ENCODE measurements at regions of chr19 and their contacts with region 1.

Region 1: GRCh38 chr19:10701955-10702525 is 801 bp downstream of the QTRT1 start:
- DNase-seq: peak; percentile 56
- ATAC-seq: peak; percentile 84
- H3K4me3 ChIP-seq: peak overlapping the region; percentile 73 to 95 (median 90)
- H3K27ac ChIP-seq: peak overlapping the region; percentile 62
- H3K4me1 ChIP-seq: peaks cover 11% of the 10 kb centered on the region
- H3K27me3 ChIP-seq: no peaks in the 10 kb centered on the region; a peak in 1 of 5 replicates
- CTCF ChIP-seq: peak; percentile 75
- EP300 ChIP-seq: no peak
- POLR2A ChIP-seq: no peak
- RAD21 ChIP-seq: peak; percentile 32; the same call in 1 of the 2 replicates

Region 2: GRCh38 chr19:10653715-10654492 is 48.1 kb before region 1 on chr19 and contains the start of gene ILF3:
- CTCF ChIA-PET with region 1: no interaction called
- POLR2A ChIA-PET with region 1: interaction called, 10 read pairs
- in situ Hi-C with region 1: no loop called
- intact Hi-C with region 1: no loop called
- DNase-seq: peak; percentile 100
- ATAC-seq: peak; percentile 84
- H3K4me3 ChIP-seq: peak within 1 kb of the TSS; percentile 92 to 96 (median 93)
- H3K27ac ChIP-seq: peak within 1 kb of the TSS; percentile 95
- H3K4me1 ChIP-seq: peaks cover 45% of the 10 kb centered on the region
- H3K27me3 ChIP-seq: no peaks in the 10 kb centered on the region; a peak in 1 of 5 replicates
- CTCF ChIP-seq: no peak; the same call in 1 of the 2 replicates
- EP300 ChIP-seq: peak in 1 of 2 experiments; percentile 49; a peak in 2 of 4 replicates
- POLR2A ChIP-seq: peak; percentile 87 to 94
- RAD21 ChIP-seq: 0 out of 2 replicates have a peak, but pooled peaks have one; percentile 9
- total RNA-seq, gene ILF3: 120 and 127 TPM in 2 replicates

Region 3: DNA sequence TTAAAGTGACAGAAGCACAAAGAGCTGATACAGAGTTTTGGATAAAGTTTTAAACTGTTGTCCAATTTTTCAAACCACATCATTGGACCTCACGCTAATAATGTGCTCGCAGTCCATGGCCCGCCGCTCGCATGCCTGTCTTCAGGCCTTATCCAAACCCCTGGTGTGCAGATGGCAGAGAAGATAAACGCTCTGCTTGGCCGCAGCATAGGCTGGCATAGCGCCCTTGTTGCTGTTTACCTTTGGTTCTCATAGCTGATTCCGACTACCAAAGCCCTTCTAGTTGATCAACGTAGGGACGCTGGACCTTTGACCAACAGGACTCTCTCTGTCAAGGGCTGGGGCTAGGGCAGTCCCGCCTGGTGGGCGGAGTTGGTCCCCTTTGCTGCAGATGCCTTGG is 24.3 kb before region 1 on chr19:
- CTCF ChIA-PET with region 1: no interaction called
- POLR2A ChIA-PET with region 1: no interaction called
- in situ Hi-C with region 1: no loop called
- intact Hi-C with region 1: no loop called
- DNase-seq: no peak
- ATAC-seq: no peak
- H3K4me3 ChIP-seq: no peak overlapping the region
- H3K27ac ChIP-seq: no peak overlapping the region
- H3K4me1 ChIP-seq: no peaks in the 10 kb centered on the region
- H3K27me3 ChIP-seq: no peaks in the 10 kb centered on the region; a peak in 1 of 5 replicates
- CTCF ChIP-seq: no peak
- EP300 ChIP-seq: no peak
- POLR2A ChIP-seq: no peak
- RAD21 ChIP-seq: no peak

Region 4: GRCh38 chr19:10712045-10712444 is 10.0 kb after region 1 on chr19:
- CTCF ChIA-PET with region 1: no interaction called
- POLR2A ChIA-PET with region 1: interaction called, 26 read pairs
- in situ Hi-C with region 1: no loop called
- intact Hi-C with region 1: no loop called
- DNase-seq: no peak
- ATAC-seq: no peak
- H3K4me3 ChIP-seq: no peak overlapping the region
- H3K27ac ChIP-seq: no peak overlapping the region
- H3K4me1 ChIP-seq: peaks cover 11% of the 10 kb centered on the region
- H3K27me3 ChIP-seq: no peaks in the 10 kb centered on the region
- CTCF ChIP-seq: no peak
- EP300 ChIP-seq: no peak
- POLR2A ChIP-seq: no peak
- RAD21 ChIP-seq: no peak

Region 5: GRCh38 chr19:10730923-10731322 is 28.9 kb after region 1 on chr19:
- CTCF ChIA-PET with region 1: no interaction called
- POLR2A ChIA-PET with region 1: no interaction called
- in situ Hi-C with region 1: no loop called
- intact Hi-C with region 1: no loop called
- DNase-seq: no peak
- ATAC-seq: no peak
- H3K4me3 ChIP-seq: no peak overlapping the region
- H3K27ac ChIP-seq: no peak overlapping the region
- H3K4me1 ChIP-seq: peaks cover 23% of the 10 kb centered on the region
- H3K27me3 ChIP-seq: no peaks in the 10 kb centered on the region
- CTCF ChIP-seq: no peak
- EP300 ChIP-seq: no peak
- POLR2A ChIP-seq: no peak
- RAD21 ChIP-seq: no peak

Region 6: DNA sequence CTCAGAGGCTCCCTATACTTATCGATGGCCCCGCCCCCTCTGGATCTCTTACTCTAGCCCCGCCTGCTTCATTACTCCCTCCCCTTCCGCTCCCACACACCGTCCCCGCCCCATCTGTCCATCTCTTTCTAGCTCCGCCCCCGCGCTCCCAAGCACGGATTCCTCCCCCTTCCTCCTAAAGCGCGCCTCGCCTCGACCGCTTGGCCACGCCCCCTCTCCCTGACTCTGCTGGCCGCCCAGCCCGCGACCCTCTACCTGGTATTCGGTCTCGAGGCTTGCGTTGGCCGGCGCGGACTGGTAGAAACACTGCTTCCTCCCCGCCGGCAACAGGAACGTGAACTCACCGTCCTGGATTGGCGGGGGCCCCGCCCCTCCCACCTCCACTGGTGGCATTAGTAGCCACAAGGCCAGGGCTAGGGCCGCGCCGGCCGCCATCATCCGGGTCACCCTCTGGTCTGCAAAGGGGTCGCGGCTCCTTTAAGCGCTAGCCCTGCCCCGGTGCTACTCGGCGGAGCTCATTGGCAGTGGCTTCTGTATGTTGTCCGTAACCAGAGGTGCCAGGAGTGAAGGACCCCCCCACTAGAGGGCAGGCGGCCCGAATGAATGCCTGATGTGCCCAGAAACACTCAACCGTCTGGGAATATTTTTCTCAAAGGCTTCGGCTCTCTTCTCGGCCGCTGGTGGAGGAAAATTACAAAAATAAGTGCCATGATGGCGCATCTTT is 133.9 kb after region 1 on chr19 and contains the start of gene TMED1:
- CTCF ChIA-PET with region 1: no interaction called
- POLR2A ChIA-PET with region 1: interaction called, 19 read pairs
- in situ Hi-C with region 1: no loop called
- intact Hi-C with region 1: no loop called
- DNase-seq: peak; percentile 98
- ATAC-seq: peak; percentile 93
- H3K4me3 ChIP-seq: peak within 1 kb of the TSS; percentile 51 to 74 (median 72); a peak in 5 of 6 replicates
- H3K27ac ChIP-seq: peak within 1 kb of the TSS; percentile 93
- H3K4me1 ChIP-seq: peaks cover 40% of the 10 kb centered on the region
- H3K27me3 ChIP-seq: no peaks in the 10 kb centered on the region
- CTCF ChIP-seq: peak; percentile 66
- EP300 ChIP-seq: no peak
- POLR2A ChIP-seq: peak; percentile 60 to 63; a peak in 3 of 4 replicates
- RAD21 ChIP-seq: peak; percentile 59
- total RNA-seq, gene TMED1: 26.4 and 51.8 TPM in 2 replicates